ENCODE measurements at regions of chr16 and their contacts with region 1.

Region 1: DNA sequence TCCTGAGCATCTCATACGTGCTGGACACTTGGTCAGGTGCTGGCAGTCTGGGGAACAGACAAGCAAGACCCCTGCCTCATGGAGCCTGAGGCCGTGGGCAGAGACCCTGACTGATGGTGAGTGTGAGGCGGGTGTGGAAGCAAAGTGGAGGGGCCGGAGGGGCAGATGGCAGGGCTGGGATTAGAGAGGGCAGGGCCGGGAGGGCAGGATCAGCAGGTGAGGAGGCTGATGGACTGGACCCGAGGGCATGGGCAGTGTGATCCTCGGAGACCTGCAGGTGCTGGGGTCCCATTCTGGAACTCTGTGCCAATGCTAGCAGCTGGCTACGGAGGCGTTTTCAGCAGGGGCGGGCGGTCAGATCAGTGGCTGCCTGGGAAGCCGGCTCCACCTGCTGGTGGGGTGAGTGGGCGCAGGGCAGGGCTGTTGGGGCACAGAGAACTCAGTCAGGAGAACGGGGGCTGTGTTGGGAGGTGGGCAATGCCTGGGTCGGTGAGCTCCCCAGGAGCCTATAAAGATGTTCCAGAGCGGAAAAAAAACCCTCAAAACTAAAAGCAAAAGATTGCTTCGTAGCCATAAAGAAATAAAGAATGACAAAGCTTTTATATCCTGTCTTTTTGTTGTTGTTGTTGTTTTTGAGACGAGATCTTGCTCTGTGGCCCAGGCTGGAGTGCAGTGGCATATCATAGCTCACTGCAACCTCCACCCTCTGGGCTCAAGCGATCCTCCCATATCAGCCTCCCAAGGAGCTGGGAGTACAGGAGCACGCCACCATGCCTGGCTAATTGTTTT is 8.9 kb upstream of the C16orf74 start:
- DNase-seq: peak; percentile 76
- ATAC-seq: no peak
- H3K4me3 ChIP-seq: peak overlapping the region in 4 of 5 experiments; percentile 8 to 49 (median 22)
- H3K4me3 Mint-ChIP-seq: peak overlapping the region; percentile 70
- H3K27ac ChIP-seq: peak overlapping the region; percentile 88 to 94
- H3K27ac Mint-ChIP-seq: peak overlapping the region; percentile 100
- H3K4me1 ChIP-seq: peaks cover 75 to 82% of the 10 kb centered on the region in 2 donors
- H3K4me1 Mint-ChIP-seq: peaks cover 61% of the 10 kb centered on the region
- H3K27me3 ChIP-seq: no peaks in the 10 kb centered on the region
- H3K27me3 Mint-ChIP-seq: no peaks in the 10 kb centered on the region
- CTCF ChIP-seq: peak; percentile 57

Region 2: DNA sequence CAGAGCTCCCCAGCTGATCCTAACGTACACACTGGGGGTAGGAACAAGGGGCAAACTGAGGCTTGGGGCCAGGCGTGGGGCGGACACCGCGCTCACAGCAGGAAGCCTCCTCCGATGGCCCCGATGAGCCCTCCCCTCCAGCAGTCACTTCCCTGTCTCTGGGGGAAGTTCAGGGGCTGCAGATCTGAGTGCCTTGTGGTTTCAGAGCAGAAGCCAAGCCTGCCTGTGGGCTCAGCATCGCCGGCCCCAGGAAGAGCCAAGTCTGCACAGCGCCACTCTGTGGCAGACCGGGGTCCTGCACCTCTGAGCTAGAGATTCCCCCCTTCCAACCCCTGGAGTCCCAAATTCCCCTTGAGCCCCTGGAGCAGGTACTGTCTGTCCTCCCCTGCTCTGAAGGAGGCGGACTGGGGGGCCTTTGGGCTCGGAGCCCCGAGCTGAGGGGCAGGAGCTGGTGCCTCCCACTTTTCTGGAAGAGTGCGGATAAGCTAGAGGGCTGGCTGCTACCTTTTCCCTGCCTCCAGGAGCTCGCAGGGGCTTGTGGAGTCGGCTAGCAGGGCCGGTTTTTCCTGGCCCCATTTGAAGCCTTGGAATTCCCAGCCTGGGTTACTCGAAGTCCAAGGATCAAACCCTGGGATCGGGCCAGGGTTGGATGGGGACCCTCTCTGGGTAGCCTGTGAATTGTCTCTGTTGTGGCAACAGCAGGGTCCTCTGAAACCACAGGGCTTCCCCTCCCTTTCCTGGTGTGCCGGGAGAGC is 143.8 kb before region 1 on chr16:
- CTCF ChIA-PET with region 1: interaction called, 11 read pairs
- POLR2A ChIA-PET with region 1: interaction called, 9 read pairs
- intact Hi-C with region 1: loop called (anchors 2 kb)
- DNase-seq: peak; percentile 90
- ATAC-seq: peak; percentile 52
- H3K4me3 ChIP-seq: peak overlapping the region in 4 of 5 experiments; percentile 4 to 60 (median 26)
- H3K4me3 Mint-ChIP-seq: peak overlapping the region; percentile 85
- H3K27ac ChIP-seq: peak overlapping the region; percentile 13 to 14
- H3K27ac Mint-ChIP-seq: peak overlapping the region; percentile 88
- H3K4me1 ChIP-seq: peaks cover 45 to 54% of the 10 kb centered on the region in 2 donors
- H3K4me1 Mint-ChIP-seq: peaks cover 46% of the 10 kb centered on the region
- H3K27me3 ChIP-seq: no peaks in the 10 kb centered on the region
- H3K27me3 Mint-ChIP-seq: no peaks in the 10 kb centered on the region
- CTCF ChIP-seq: peak; percentile 91

Region 3: DNA sequence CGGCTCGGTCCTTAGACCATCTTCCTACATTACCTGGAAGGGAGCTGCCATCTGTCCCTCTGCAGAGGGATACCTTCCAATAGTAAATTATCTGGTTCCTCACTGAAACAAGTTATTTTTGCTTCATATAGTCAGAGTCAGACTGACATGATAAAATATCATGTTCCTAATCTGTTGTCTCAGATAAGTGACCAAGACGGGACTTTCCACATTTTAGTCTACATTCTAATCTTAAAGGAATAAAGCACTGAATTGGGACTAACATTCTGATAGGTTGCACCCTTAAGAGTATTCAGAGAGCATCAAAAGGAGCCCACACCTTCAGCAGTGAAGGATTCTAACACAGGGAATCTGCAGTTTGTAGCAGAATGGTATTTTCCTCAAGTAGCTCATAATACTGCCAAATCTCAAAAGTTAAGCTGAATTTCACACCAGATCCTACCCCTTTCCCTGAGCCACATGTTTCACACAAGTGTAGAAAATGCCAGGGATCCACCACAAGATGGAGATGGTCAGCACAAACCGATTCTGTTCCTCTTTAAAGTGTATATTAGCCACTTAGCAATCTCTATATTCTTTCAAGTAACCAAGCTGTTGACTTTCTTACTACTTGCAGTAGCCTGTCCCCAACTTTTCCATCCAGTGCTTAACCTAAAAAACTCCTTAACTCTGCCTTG is 84.4 kb before region 1 on chr16:
- CTCF ChIA-PET with region 1: interaction called, 61 read pairs
- POLR2A ChIA-PET with region 1: no interaction called
- intact Hi-C with region 1: loop called (anchors 1 kb)
- DNase-seq: no peak
- ATAC-seq: no peak
- H3K4me3 ChIP-seq: no peak overlapping the region
- H3K4me3 Mint-ChIP-seq: no peak overlapping the region
- H3K27ac ChIP-seq: peak overlapping the region in 1 of 2 donors; percentile 15
- H3K27ac Mint-ChIP-seq: peak overlapping the region; percentile 46
- H3K4me1 ChIP-seq: peaks cover 5 to 7% of the 10 kb centered on the region in 2 donors
- H3K4me1 Mint-ChIP-seq: peaks cover 9% of the 10 kb centered on the region
- H3K27me3 ChIP-seq: no peaks in the 10 kb centered on the region
- H3K27me3 Mint-ChIP-seq: no peaks in the 10 kb centered on the region
- CTCF ChIP-seq: peak; percentile 27

Region 4: GRCh38 chr16:85717393-85718121 is 42.3 kb before region 1 on chr16:
- CTCF ChIA-PET with region 1: interaction called, 77 read pairs
- POLR2A ChIA-PET with region 1: no interaction called
- intact Hi-C with region 1: loop called (anchors 1 kb)
- DNase-seq: peak; percentile 77
- ATAC-seq: peak; percentile 28
- H3K4me3 ChIP-seq: no peak overlapping the region
- H3K4me3 Mint-ChIP-seq: no peak overlapping the region
- H3K27ac ChIP-seq: no peak overlapping the region
- H3K27ac Mint-ChIP-seq: peak overlapping the region; percentile 26
- H3K4me1 ChIP-seq: peaks cover 7 to 34% of the 10 kb centered on the region in 2 donors
- H3K4me1 Mint-ChIP-seq: peaks cover 27% of the 10 kb centered on the region
- H3K27me3 ChIP-seq: no peaks in the 10 kb centered on the region
- H3K27me3 Mint-ChIP-seq: no peaks in the 10 kb centered on the region
- CTCF ChIP-seq: peak; percentile 80

Region 5: GRCh38 chr16:85799497-85800337 is 39.9 kb after region 1 on chr16 and contains the starts of genes COX4I1 and EMC8:
- CTCF ChIA-PET with region 1: interaction called, 6 read pairs
- POLR2A ChIA-PET with region 1: interaction called, 7 read pairs
- intact Hi-C with region 1: loop called (anchors 1 kb)
- DNase-seq: peak; percentile 95
- ATAC-seq: peak; percentile 86
- H3K4me3 ChIP-seq: peak within 1 kb of the TSS; percentile 73 to 93 (median 78)
- H3K4me3 Mint-ChIP-seq: peak within 1 kb of the TSS; percentile 92
- H3K27ac ChIP-seq: peak within 1 kb of the TSS; percentile 82 to 97
- H3K27ac Mint-ChIP-seq: peak within 1 kb of the TSS; percentile 98
- H3K4me1 ChIP-seq: peaks cover 19 to 23% of the 10 kb centered on the region in 2 donors
- H3K4me1 Mint-ChIP-seq: peaks cover 57% of the 10 kb centered on the region
- H3K27me3 ChIP-seq: no peaks in the 10 kb centered on the region
- H3K27me3 Mint-ChIP-seq: no peaks in the 10 kb centered on the region
- CTCF ChIP-seq: no peak
- total RNA-seq, gene COX4I1: 767 and 813 TPM in 2 replicates
- total RNA-seq, gene EMC8: 32.9 and 33.1 TPM in 2 replicates

Region 6: DNA sequence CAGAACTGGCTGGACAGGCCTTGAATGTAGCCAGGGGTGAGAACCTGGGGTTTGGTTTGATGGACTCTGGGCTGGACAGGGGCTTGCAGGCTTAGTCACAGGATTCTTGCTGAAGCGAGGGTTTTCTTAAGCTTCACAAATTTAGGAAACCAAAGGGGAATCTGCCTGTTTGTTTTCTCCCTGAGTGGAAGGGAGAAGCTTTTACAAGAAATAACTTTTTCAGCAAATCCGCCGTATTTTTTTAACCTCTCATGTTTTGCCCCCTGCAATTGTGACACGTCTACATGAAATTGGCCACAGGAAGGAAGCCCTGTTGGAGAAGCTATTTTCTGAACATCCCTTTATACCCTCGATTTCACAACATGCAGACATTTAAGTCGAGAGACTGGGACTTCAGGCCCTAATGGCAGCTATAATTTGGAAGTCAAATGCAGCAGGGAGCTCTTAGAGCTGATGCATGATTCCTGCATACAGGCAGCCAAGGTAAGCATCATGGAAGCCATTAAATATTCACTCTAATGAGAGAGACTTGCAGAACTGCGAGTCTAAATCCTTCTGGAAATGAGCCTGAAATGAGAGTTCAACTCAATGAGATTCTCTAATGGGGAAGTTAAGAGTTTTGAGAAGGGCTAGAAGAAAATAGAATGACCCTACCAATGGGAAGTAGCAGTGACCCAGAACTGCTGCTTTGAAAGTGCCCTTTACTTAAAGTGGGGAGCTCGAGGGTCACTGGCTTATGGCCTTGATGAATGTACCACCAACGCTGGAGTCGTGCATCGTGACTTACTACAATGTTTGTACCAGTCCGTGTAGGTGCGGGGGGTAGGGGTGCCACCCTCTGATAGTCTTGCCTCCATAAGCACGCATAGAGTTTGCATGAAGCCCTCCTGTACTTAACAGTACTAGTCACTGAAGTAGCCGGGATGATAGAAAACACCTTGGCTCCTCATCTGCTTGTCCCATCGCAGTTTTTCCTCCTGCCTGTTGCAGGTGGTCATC is 94.0 kb after region 1 on chr16:
- CTCF ChIA-PET with region 1: no interaction called
- POLR2A ChIA-PET with region 1: no interaction called
- intact Hi-C with region 1: no loop called
- DNase-seq: no peak
- ATAC-seq: peak; percentile 14
- H3K4me3 ChIP-seq: no peak overlapping the region
- H3K4me3 Mint-ChIP-seq: no peak overlapping the region
- H3K27ac ChIP-seq: no peak overlapping the region
- H3K27ac Mint-ChIP-seq: no peak overlapping the region
- H3K4me1 ChIP-seq: peaks cover 13 to 16% of the 10 kb centered on the region in 2 donors
- H3K4me1 Mint-ChIP-seq: peaks cover 31% of the 10 kb centered on the region
- H3K27me3 ChIP-seq: no peaks in the 10 kb centered on the region
- H3K27me3 Mint-ChIP-seq: no peaks in the 10 kb centered on the region
- CTCF ChIP-seq: no peak

Region 7: GRCh38 chr16:85879975-85880831 is 120.4 kb after region 1 on chr16:
- CTCF ChIA-PET with region 1: no interaction called
- POLR2A ChIA-PET with region 1: no interaction called
- intact Hi-C with region 1: no loop called
- DNase-seq: no peak
- ATAC-seq: peak; percentile 41
- H3K4me3 ChIP-seq: no peak overlapping the region
- H3K4me3 Mint-ChIP-seq: no peak overlapping the region
- H3K27ac ChIP-seq: no peak overlapping the region
- H3K27ac Mint-ChIP-seq: peak overlapping the region; percentile 18
- H3K4me1 ChIP-seq: peaks cover 0 to 7% of the 10 kb centered on the region in 2 donors
- H3K4me1 Mint-ChIP-seq: peaks cover 18% of the 10 kb centered on the region
- H3K27me3 ChIP-seq: no peaks in the 10 kb centered on the region
- H3K27me3 Mint-ChIP-seq: no peaks in the 10 kb centered on the region
- CTCF ChIP-seq: no peak

Region 8: GRCh38 chr16:85986931-85987749 is 227.3 kb after region 1 on chr16:
- CTCF ChIA-PET with region 1: interaction called, 5 read pairs
- POLR2A ChIA-PET with region 1: no interaction called
- intact Hi-C with region 1: loop called (anchors 5 kb)
- DNase-seq: peak; percentile 51
- ATAC-seq: no peak
- H3K4me3 ChIP-seq: no peak overlapping the region
- H3K4me3 Mint-ChIP-seq: peak overlapping the region; percentile 83
- H3K27ac ChIP-seq: no peak overlapping the region
- H3K27ac Mint-ChIP-seq: peak overlapping the region; percentile 81
- H3K4me1 ChIP-seq: peaks cover 96 to 100% of the 10 kb centered on the region in 2 donors
- H3K4me1 Mint-ChIP-seq: peaks cover 98% of the 10 kb centered on the region
- H3K27me3 ChIP-seq: no peaks in the 10 kb centered on the region
- H3K27me3 Mint-ChIP-seq: no peaks in the 10 kb centered on the region
- CTCF ChIP-seq: no peak

Measured in B cell (primary cell).